ENCODE measurements at regions of chr2 and their contacts with region 1.

Region 1: GRCh38 chr2:173940208-173941020 is 24.8 kb downstream of the SP3 start:
- DNase-seq: no peak
- ATAC-seq: no peak
- H3K4me3 ChIP-seq: no peak overlapping the region
- H3K4me3 Mint-ChIP-seq: peak overlapping the region; percentile 45
- H3K27ac ChIP-seq: no peak overlapping the region
- H3K27ac Mint-ChIP-seq: peak overlapping the region; percentile 8
- H3K4me1 ChIP-seq: peaks cover 55% of the 10 kb centered on the region
- H3K4me1 Mint-ChIP-seq: peaks cover 55% of the 10 kb centered on the region
- H3K27me3 ChIP-seq: no peaks in the 10 kb centered on the region
- H3K27me3 Mint-ChIP-seq: no peaks in the 10 kb centered on the region
- CTCF ChIP-seq: no peak

Region 2: DNA sequence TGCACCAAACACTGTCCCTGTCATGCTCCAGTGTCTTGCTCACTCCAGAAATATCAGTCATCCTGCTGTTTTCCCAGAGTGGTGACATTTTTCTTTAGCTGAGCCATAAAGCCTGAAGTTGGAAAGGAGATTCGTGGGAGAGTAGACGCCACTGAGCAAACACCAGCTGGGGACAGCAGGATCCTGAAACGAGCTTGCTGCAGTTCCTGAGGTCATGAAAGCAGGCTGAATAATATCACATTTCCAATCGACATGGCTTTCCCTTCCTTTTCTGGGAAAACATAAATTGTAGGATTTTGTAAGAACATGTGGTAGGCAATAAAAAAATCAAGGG is 309.3 kb before region 1 on chr2:
- CTCF ChIA-PET with region 1: no interaction called
- POLR2A ChIA-PET with region 1: no interaction called
- intact Hi-C with region 1: no loop called
- DNase-seq: no peak
- ATAC-seq: no peak
- H3K4me3 ChIP-seq: no peak overlapping the region
- H3K4me3 Mint-ChIP-seq: no peak overlapping the region
- H3K27ac ChIP-seq: no peak overlapping the region
- H3K27ac Mint-ChIP-seq: no peak overlapping the region
- H3K4me1 ChIP-seq: no peaks in the 10 kb centered on the region
- H3K4me1 Mint-ChIP-seq: no peaks in the 10 kb centered on the region
- H3K27me3 ChIP-seq: peaks cover 0 to 11% of the 10 kb centered on the region in 2 experiments
- H3K27me3 Mint-ChIP-seq: peaks cover 35% of the 10 kb centered on the region
- CTCF ChIP-seq: no peak

Region 3: DNA sequence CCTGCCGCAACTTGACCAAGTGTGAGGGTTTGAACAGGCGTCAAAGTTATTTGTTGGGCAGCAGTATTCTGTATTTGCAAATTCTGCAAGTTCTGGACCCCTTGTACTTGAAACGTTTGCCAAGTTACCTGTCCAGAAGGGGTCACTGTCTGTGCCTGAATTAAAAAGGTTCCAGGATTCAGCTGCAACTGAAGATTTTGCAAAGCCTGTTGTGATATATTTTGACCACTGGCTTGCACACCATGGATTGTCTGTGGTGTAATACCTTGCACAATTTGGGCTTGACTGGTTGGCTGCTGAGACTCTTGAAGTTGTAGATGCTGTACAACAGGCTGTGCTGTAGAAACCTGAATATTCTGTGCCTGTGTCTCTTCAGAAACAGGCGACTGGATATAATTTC is 14.6 kb after region 1 on chr2:
- CTCF ChIA-PET with region 1: interaction called, 3 read pairs
- POLR2A ChIA-PET with region 1: no interaction called
- intact Hi-C with region 1: loop called (anchors 2 kb)
- DNase-seq: peak in 2 of 14 experiments; percentile 39 to 42
- ATAC-seq: no peak
- H3K4me3 ChIP-seq: no peak overlapping the region
- H3K4me3 Mint-ChIP-seq: peak overlapping the region; percentile 55
- H3K27ac ChIP-seq: no peak overlapping the region
- H3K27ac Mint-ChIP-seq: no peak overlapping the region
- H3K4me1 ChIP-seq: peaks cover 31% of the 10 kb centered on the region
- H3K4me1 Mint-ChIP-seq: peaks cover 100% of the 10 kb centered on the region
- H3K27me3 ChIP-seq: no peaks in the 10 kb centered on the region
- H3K27me3 Mint-ChIP-seq: no peaks in the 10 kb centered on the region
- CTCF ChIP-seq: no peak